K562 (cell line): ENCODE measurements at regions of chr10 and their contacts with region 1.

Region 1: DNA sequence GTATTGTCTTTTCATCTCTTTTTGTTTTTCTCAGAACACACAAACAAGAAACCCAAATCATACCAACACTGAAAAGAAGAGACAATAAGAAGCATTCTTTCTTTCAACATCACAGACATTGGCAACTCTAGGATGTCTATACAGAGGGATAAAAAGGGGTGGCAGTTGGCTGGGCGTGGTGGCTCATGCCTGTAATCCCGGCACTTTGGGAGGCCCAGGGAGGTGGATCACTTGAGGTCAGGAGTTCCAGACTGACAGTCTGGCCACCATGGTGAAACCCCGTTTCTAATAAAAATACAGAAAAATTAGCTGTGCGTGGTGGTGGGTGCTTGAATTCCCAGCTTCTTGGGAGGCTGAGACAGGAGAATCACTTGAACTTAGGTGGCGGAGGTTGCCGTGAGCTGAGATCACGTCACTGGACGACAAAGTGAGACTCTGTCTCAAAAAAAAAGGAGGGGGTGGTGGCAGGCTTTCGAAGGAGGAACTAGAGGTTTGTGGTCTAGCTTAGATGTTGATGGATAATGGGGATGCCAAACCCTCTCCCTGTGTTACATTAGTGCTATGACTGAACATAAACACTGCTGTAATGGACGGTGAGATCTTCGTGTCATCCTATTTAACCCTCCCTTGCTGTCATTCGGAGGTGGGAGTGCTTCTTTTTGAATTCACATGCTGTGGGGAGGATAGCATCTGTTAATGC is 9.4 kb downstream of the CNNM2 start:
- DNase-seq: peak in 3 of 4 experiments; percentile 9 to 51 (median 37)
- ATAC-seq: peak; percentile 89
- H3K4me3 ChIP-seq: no peak overlapping the region; the same call in 1 of the 2 replicates
- H3K27ac ChIP-seq: peak overlapping the region; percentile 47; the same call in 2 of the 3 replicates
- H3K4me1 ChIP-seq: peaks cover 4 to 9% of the 10 kb centered on the region in 2 experiments; a peak in 2 of 5 replicates
- H3K27me3 ChIP-seq: no peaks in the 10 kb centered on the region
- CTCF ChIP-seq: no peak
- EP300 ChIP-seq: no peak
- POLR2A ChIP-seq: no peak
- RAD21 ChIP-seq: no peak

Region 2: GRCh38 chr10:102975483-102976379 is 48.3 kb after region 1 on chr10:
- CTCF ChIA-PET with region 1: no interaction called
- POLR2A ChIA-PET with region 1: no interaction called
- in situ Hi-C with region 1: loop called (anchors 5 kb)
- intact Hi-C with region 1: loop called (anchors 10 kb)
- DNase-seq: no peak
- ATAC-seq: no peak
- H3K4me3 ChIP-seq: no peak overlapping the region
- H3K27ac ChIP-seq: no peak overlapping the region
- H3K4me1 ChIP-seq: peaks cover 0 to 4% of the 10 kb centered on the region in 2 experiments; a peak in 2 of 5 replicates
- H3K27me3 ChIP-seq: no peaks in the 10 kb centered on the region
- CTCF ChIP-seq: no peak
- EP300 ChIP-seq: no peak
- POLR2A ChIP-seq: no peak
- RAD21 ChIP-seq: no peak

Region 3: GRCh38 chr10:102988404-102989314 is 61.2 kb after region 1 on chr10:
- CTCF ChIA-PET with region 1: no interaction called
- POLR2A ChIA-PET with region 1: no interaction called
- in situ Hi-C with region 1: no loop called
- intact Hi-C with region 1: loop called (anchors 10 kb)
- DNase-seq: peak; percentile 52 to 94 (median 65)
- ATAC-seq: peak; percentile 88
- H3K4me3 ChIP-seq: no peak overlapping the region
- H3K27ac ChIP-seq: peak overlapping the region; percentile 95
- H3K4me1 ChIP-seq: peaks cover 28 to 33% of the 10 kb centered on the region in 2 experiments
- H3K27me3 ChIP-seq: no peaks in the 10 kb centered on the region
- CTCF ChIP-seq: no peak
- EP300 ChIP-seq: peak; percentile 97
- POLR2A ChIP-seq: no peak
- RAD21 ChIP-seq: no peak